CD4-positive, alpha-beta T cell (primary cell): ENCODE measurements at regions of chr10 and their contacts with region 1.

Region 1: GRCh38 chr10:59625721-59626522 is 83.7 kb downstream of the SLC16A9 start:
- DNase-seq: peak in 13 of 14 experiments; percentile 6 to 79 (median 26)
- ATAC-seq: peak; percentile 87
- H3K4me3 ChIP-seq: no peak overlapping the region
- H3K4me3 Mint-ChIP-seq: no peak overlapping the region
- H3K27ac ChIP-seq: no peak overlapping the region
- H3K27ac Mint-ChIP-seq: no peak overlapping the region
- H3K4me1 ChIP-seq: no peaks in the 10 kb centered on the region
- H3K4me1 Mint-ChIP-seq: no peaks in the 10 kb centered on the region
- H3K27me3 ChIP-seq: no peaks in the 10 kb centered on the region
- H3K27me3 Mint-ChIP-seq: peaks cover 2% of the 10 kb centered on the region
- CTCF ChIP-seq: peak; percentile 88

Region 2: DNA sequence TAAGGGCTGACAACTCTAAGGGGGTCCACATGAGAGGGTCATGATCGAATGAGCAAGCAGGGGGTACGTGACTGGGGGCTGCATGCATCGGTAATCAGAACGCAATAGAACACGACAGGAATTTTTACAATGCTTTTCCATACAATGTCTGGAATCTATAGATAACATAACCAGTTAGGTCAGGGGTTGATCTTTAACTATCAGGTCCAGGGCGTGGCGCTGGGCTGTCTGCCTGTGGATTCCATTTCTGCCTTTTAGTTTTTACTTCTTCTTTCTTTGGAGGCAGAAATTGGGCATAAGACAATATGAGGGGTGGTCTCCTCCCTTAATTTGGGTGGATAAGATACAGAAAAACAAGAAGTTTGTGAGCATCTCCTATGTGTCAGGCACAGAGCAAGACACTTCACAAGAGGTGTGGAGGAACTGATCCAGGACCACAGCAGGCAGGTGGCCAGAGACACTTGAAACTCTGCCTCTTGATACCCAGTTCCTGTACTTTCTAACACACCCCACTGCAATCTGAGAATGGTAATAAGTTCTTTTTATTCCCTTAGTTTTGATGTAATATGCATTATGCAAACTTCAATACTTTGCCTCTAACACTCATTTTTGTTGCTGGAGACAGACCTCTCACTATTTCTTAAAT is 145.4 kb after region 1 on chr10:
- CTCF ChIA-PET with region 1: no interaction called
- POLR2A ChIA-PET with region 1: no interaction called
- intact Hi-C with region 1: no loop called
- DNase-seq: no peak
- ATAC-seq: no peak
- H3K4me3 ChIP-seq: no peak overlapping the region
- H3K4me3 Mint-ChIP-seq: no peak overlapping the region
- H3K27ac ChIP-seq: no peak overlapping the region
- H3K27ac Mint-ChIP-seq: no peak overlapping the region
- H3K4me1 ChIP-seq: no peaks in the 10 kb centered on the region
- H3K4me1 Mint-ChIP-seq: no peaks in the 10 kb centered on the region
- H3K27me3 ChIP-seq: no peaks in the 10 kb centered on the region
- H3K27me3 Mint-ChIP-seq: no peaks in the 10 kb centered on the region
- CTCF ChIP-seq: no peak

Region 3: DNA sequence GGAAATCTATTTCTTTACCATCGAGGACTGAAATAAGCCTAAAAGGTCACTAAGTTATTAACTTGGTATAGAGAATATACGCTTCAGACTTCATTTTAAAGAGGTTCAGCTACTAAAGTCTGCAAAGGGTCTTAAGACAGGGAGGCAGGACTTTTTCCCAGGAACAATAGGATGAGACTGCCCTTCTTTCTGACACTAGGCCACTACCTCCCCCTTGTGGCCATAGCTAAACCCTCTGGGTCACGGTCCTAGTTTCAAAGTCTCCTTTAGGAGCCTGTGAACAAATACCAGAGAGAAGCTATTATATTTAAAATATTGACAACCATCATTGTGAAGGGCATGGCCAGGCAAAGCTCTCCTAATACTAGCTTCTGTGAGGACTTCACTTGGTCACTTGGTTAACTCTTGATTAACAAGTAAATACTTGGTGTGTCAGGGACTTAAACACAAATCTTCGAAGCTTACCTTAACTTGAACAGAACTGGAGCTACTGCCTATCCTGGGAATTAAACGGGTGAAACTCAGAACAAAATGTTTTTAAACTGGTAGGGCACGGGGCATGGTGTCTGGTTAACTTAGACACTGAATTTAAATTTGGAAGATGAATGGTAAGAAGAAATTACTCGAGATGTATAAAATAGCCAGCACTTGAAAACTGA is 204.8 kb after region 1 on chr10:
- CTCF ChIA-PET with region 1: no interaction called
- POLR2A ChIA-PET with region 1: no interaction called
- intact Hi-C with region 1: loop called in 1 of 2 experiments (anchors 10 kb)
- DNase-seq: peak in 4 of 14 experiments; percentile 14 to 45 (median 32)
- ATAC-seq: no peak
- H3K4me3 ChIP-seq: no peak overlapping the region
- H3K4me3 Mint-ChIP-seq: no peak overlapping the region
- H3K27ac ChIP-seq: no peak overlapping the region
- H3K27ac Mint-ChIP-seq: no peak overlapping the region
- H3K4me1 ChIP-seq: peaks cover 2% of the 10 kb centered on the region
- H3K4me1 Mint-ChIP-seq: peaks cover 51% of the 10 kb centered on the region
- H3K27me3 ChIP-seq: no peaks in the 10 kb centered on the region
- H3K27me3 Mint-ChIP-seq: no peaks in the 10 kb centered on the region
- CTCF ChIP-seq: peak; percentile 33

Region 4: DNA sequence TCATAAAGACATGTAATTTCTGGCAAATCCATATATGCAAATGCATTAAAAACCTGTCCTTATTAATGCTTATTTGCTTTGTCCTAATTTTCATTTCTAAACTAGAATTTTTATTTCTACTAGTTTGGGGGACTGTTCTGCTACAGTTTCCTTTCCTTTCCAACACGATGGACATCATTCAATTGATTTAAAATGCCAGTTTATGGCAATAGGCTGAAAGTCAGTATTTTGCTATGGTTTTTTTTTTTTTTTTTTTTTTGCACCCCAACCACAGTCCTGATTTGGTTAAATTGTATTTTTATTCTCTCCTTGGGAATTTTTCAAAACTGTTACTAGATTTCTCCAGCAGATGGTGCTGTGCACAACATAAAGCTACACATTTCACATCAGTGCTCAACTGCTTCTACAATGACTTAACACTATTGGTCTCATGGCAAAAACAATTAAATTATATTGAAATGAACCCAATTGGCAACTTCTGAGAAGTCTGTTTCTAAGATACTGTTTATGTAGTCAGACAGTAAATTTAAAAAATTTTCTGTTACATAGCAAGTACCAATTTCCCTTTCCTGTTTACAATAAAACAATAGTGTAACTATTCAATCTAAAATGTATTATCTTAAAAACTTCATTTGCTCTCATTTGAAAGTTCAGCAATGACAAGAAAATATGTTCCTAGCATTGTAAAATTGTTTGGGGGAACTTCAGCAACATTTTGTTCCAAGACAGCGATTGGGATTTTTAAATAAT is 474.3 kb after region 1 on chr10:
- CTCF ChIA-PET with region 1: interaction called, 3 read pairs
- POLR2A ChIA-PET with region 1: no interaction called
- intact Hi-C with region 1: loop called (anchors 5 kb)
- DNase-seq: peak in 4 of 14 experiments; percentile 6 to 67 (median 56)
- ATAC-seq: peak; percentile 66
- H3K4me3 ChIP-seq: no peak overlapping the region
- H3K4me3 Mint-ChIP-seq: no peak overlapping the region
- H3K27ac ChIP-seq: no peak overlapping the region
- H3K27ac Mint-ChIP-seq: no peak overlapping the region
- H3K4me1 ChIP-seq: no peaks in the 10 kb centered on the region
- H3K4me1 Mint-ChIP-seq: no peaks in the 10 kb centered on the region
- H3K27me3 ChIP-seq: no peaks in the 10 kb centered on the region
- H3K27me3 Mint-ChIP-seq: no peaks in the 10 kb centered on the region
- CTCF ChIP-seq: peak; percentile 76

Region 5: GRCh38 chr10:60646966-60647796 is 1021.3 kb after region 1 on chr10:
- CTCF ChIA-PET with region 1: interaction called, 3 read pairs
- POLR2A ChIA-PET with region 1: no interaction called
- intact Hi-C with region 1: loop called (anchors 1 to 2 kb)
- DNase-seq: peak in 9 of 14 experiments; percentile 8 to 78 (median 33)
- ATAC-seq: peak; percentile 40
- H3K4me3 ChIP-seq: no peak overlapping the region
- H3K4me3 Mint-ChIP-seq: no peak overlapping the region
- H3K27ac ChIP-seq: no peak overlapping the region
- H3K27ac Mint-ChIP-seq: peak overlapping the region; percentile 5
- H3K4me1 ChIP-seq: peaks cover 6% of the 10 kb centered on the region
- H3K4me1 Mint-ChIP-seq: peaks cover 66% of the 10 kb centered on the region
- H3K27me3 ChIP-seq: no peaks in the 10 kb centered on the region
- H3K27me3 Mint-ChIP-seq: no peaks in the 10 kb centered on the region
- CTCF ChIP-seq: peak; percentile 91

Region 6: GRCh38 chr10:60964257-60965235 is 1338.6 kb after region 1 on chr10:
- CTCF ChIA-PET with region 1: no interaction called
- POLR2A ChIA-PET with region 1: no interaction called
- intact Hi-C with region 1: loop called (anchors 1 to 5 kb)
- DNase-seq: peak in 12 of 14 experiments; percentile 15 to 66 (median 33)
- ATAC-seq: peak; percentile 67
- H3K4me3 ChIP-seq: no peak overlapping the region
- H3K4me3 Mint-ChIP-seq: no peak overlapping the region
- H3K27ac ChIP-seq: no peak overlapping the region
- H3K27ac Mint-ChIP-seq: no peak overlapping the region
- H3K4me1 ChIP-seq: no peaks in the 10 kb centered on the region
- H3K4me1 Mint-ChIP-seq: no peaks in the 10 kb centered on the region
- H3K27me3 ChIP-seq: peaks cover 0 to 20% of the 10 kb centered on the region in 2 experiments
- H3K27me3 Mint-ChIP-seq: peaks cover 32% of the 10 kb centered on the region
- CTCF ChIP-seq: peak; percentile 95